WTC11 (cell line): ENCODE measurements at regions of chr18 and their contacts with region 1.

Region 1: DNA sequence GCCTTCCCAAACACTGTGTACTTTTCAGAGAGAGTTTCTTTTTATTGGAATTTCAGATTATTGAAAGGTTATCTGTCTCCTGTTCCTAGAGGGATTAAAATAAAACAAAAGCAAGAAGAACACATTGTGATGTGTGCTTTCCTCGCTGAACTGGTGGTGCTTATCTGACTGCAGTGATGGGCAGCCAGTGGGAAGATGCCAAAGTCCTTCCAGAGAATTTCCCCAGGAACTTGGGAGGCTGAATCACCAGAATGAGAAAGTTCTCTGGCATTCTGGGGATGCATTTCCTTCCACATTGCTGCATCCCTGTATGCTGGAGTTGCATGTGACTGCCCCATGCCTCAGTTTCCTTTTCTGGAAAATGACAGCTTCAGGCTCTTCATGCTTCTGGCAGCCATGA is 53.9 kb upstream of the SEC11C start:
- DNase-seq: no peak
- ATAC-seq: no peak
- H3K4me3 Mint-ChIP-seq: no peak overlapping the region
- H3K27ac Mint-ChIP-seq: no peak overlapping the region
- H3K4me1 Mint-ChIP-seq: peaks cover 2% of the 10 kb centered on the region
- H3K27me3 Mint-ChIP-seq: peaks cover 10% of the 10 kb centered on the region
- CTCF ChIP-seq: no peak

Region 2: DNA sequence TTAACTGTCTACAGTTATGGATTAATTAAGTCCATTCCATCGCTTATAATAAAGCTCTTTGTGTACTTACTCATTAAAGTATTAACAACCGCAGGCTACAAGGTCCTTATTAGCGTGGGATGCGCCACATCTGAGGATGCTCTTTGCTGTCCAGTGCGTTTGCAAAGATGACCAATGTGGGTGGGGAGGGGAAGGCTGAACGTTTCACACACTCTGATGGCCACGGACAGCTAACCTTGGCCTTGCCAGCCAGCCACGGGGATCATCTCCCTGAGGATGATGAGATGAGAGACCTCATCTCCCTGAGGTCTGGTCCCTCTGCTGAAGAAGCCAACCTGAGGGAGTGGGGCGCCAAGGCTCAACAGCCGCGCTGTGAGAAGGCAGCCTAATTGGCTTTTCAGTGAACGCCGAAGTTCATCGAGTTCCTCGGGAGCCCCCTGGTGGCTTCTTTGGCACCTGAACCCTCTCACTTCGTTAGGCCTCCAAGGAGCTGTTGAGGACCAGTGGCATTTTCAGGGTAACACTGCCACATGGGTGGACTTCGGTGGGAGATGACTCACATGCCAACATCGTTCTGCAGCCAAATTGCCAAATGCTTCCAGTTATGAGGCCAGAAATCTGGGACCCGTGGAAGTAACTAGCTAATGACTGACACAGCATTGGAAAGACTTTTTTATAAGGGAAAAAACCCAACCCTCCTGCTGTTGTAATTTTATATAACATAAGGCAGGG is 15.4 kb before region 1 on chr18:
- CTCF ChIA-PET with region 1: interaction called, 47 read pairs
- POLR2A ChIA-PET with region 1: no interaction called
- DNase-seq: peak; percentile 96
- ATAC-seq: peak; percentile 98
- H3K4me3 Mint-ChIP-seq: no peak overlapping the region
- H3K27ac Mint-ChIP-seq: no peak overlapping the region
- H3K4me1 Mint-ChIP-seq: no peaks in the 10 kb centered on the region
- H3K27me3 Mint-ChIP-seq: no peaks in the 10 kb centered on the region
- CTCF ChIP-seq: peak; percentile 82

Region 3: DNA sequence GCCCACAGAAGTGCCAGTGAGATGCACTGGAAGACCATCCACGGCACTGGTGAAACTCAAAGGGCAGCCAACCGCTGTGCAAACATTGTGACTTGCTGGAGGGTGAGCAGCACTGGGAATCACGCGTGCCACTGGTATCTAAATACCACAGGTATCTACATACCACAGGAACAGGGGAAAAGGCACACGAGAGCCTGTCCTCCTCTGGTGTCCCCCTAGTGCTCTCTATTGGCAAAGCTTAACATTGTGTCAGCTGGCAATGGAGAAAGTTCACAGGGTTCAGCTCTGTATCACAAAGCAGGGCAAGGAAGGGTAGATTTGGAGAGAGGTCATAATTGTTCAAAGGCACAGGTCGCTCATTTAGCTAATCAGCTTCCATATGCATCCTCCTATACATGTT is 41.2 kb after region 1 on chr18:
- CTCF ChIA-PET with region 1: interaction called, 16 read pairs
- POLR2A ChIA-PET with region 1: no interaction called
- DNase-seq: no peak
- ATAC-seq: peak; percentile 95
- H3K4me3 Mint-ChIP-seq: no peak overlapping the region
- H3K27ac Mint-ChIP-seq: no peak overlapping the region
- H3K4me1 Mint-ChIP-seq: no peaks in the 10 kb centered on the region
- H3K27me3 Mint-ChIP-seq: peaks cover 26% of the 10 kb centered on the region
- CTCF ChIP-seq: no peak

Region 4: DNA sequence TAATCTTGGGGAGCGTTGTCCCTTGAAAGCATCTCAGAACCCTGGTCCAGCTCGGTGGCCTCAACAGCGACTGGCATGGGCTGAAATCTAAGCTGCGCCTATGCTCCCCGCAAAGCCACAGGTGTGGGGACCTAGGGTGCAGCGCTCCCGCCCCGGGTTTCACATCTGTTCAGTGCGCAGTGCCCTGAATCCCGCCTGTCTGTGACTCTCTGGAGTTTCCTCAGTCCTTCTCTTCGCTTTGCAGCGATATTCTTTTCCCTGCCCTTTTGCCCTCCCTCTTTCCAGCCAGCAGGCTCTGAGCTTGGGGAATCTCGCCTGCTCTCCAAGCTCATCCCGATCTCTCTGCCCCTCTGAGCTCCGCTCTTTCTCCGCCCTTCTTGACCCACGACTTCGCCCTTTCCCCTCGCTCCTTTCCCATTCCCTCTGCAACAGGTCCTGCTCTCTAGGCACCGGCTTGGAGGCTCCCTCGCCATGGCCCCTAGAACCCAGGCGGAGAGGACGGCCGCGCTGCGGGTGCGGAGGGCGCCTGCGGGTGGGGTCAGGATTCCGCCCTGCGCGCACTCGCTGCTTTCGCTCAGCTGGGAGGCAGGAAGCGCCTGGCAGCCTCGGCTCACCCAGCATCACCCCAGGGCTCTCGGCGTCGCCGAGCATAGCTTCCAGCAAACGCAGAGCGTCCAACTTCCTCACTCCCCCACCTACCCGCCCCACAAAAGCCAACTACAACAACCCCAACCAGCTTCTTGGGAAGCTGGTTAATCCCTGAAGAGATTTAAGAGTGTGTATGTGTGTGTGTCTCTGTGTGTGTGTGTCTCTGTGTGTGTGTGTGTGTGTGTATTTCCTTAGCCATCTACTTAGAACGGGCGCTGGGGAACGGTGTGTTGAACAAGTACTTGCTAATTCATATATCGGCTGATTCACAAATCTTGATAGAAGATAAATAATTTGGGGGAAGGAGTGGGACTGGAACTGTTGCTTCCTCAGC is 135.3 kb after region 1 on chr18:
- CTCF ChIA-PET with region 1: interaction called, 20 read pairs
- POLR2A ChIA-PET with region 1: no interaction called
- DNase-seq: peak; percentile 41
- ATAC-seq: peak; percentile 41
- H3K4me3 Mint-ChIP-seq: peak overlapping the region; percentile 79
- H3K27ac Mint-ChIP-seq: no peak overlapping the region
- H3K4me1 Mint-ChIP-seq: peaks cover 19% of the 10 kb centered on the region
- H3K27me3 Mint-ChIP-seq: peaks cover 100% of the 10 kb centered on the region
- CTCF ChIP-seq: no peak